ENCODE measurements at regions of chr15 and their contacts with region 1.

Region 1: GRCh38 chr15:32747921-32748342 is 30.1 kb downstream of the GREM1 start:
- DNase-seq: peak; percentile 26
- H3K4me3 ChIP-seq: no peak overlapping the region
- H3K27me3 ChIP-seq: no peaks in the 10 kb centered on the region
- CTCF ChIP-seq: no peak

Region 2: GRCh38 chr15:32730677-32731654 is 17.0 kb before region 1 on chr15:
- CTCF ChIA-PET with region 1: no interaction called
- POLR2A ChIA-PET with region 1: no interaction called
- DNase-seq: no peak
- H3K4me3 ChIP-seq: no peak overlapping the region
- H3K27me3 ChIP-seq: no peaks in the 10 kb centered on the region
- CTCF ChIP-seq: no peak

Region 3: DNA sequence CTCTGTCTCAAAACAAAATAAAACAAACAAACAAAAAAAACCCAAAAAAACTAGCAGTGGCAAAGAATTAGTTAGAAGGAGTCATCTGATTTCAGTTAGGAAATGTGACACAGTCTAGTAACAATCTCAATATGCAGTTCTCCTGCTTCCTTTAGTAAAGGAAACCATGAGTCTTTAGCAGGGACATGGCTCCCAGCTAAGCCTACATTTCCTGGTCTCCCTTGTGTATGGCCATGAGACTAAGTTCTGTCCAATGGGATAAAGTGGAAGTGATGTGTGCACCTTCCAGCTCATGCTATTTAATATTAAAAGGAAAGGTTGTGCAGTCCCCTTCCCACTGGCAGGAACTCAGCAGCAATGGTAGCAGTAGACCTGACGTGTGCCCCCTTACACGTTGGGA is 44.5 kb after region 1 on chr15:
- CTCF ChIA-PET with region 1: interaction called, 3 read pairs
- POLR2A ChIA-PET with region 1: interaction called, 10 read pairs
- DNase-seq: no peak
- H3K4me3 ChIP-seq: no peak overlapping the region
- H3K27me3 ChIP-seq: no peaks in the 10 kb centered on the region
- CTCF ChIP-seq: no peak